WTC11 (cell line): ENCODE measurements at regions of chr2 and their contacts with region 1.

Region 1: GRCh38 chr2:31138037-31138962 is at the start of gene GALNT14:
- DNase-seq: peak; percentile 74
- ATAC-seq: peak; percentile 71
- H3K4me3 Mint-ChIP-seq: peak within 1 kb of the TSS; percentile 74
- H3K27ac Mint-ChIP-seq: no peak within 1 kb of the TSS
- H3K4me1 Mint-ChIP-seq: peaks cover 26% of the 10 kb centered on the region
- H3K27me3 Mint-ChIP-seq: peaks cover 78% of the 10 kb centered on the region
- CTCF ChIP-seq: 0 out of 2 replicates have a peak, but pooled peaks have one; percentile 13
- total RNA-seq, gene GALNT14: 6.0 to 6.8 TPM (median 6.3 TPM) in 3 replicates

Region 2: DNA sequence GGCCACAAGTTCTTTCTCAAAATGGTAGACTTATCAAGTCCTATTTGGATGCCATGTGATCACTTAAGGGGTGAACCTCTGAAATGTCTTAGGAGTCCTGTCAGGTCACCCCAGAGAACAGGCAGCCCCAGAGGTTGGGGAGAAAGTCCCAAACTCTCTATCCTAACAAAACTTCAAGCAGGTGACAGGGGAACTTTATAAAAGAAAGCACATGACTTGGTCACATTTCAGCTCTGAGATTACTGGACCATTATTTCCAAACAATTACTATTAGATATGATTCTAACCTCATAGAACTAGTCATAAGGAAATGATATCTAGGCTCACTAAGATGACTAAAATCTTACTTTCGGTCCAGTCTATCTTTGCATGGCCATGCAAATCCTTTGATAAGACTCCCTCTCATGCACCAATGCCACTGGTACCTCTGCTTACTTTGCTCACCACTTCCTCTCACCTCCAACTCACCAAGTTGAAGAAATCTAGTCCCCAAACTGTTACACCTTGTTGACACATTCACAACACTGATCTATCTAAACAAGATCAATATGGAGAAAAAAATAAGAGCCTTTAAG is 107.1 kb before region 1 on chr2:
- CTCF ChIA-PET with region 1: no interaction called
- POLR2A ChIA-PET with region 1: no interaction called
- DNase-seq: no peak
- ATAC-seq: no peak
- H3K4me3 Mint-ChIP-seq: no peak overlapping the region
- H3K27ac Mint-ChIP-seq: no peak overlapping the region
- H3K4me1 Mint-ChIP-seq: peaks cover 12% of the 10 kb centered on the region
- H3K27me3 Mint-ChIP-seq: no peaks in the 10 kb centered on the region
- CTCF ChIP-seq: no peak

Region 3: GRCh38 chr2:31089645-31090044 is 48.7 kb before region 1 on chr2:
- CTCF ChIA-PET with region 1: interaction called, 14 read pairs
- POLR2A ChIA-PET with region 1: interaction called, 3 read pairs
- DNase-seq: no peak
- ATAC-seq: peak; percentile 51; the same call in 1 of the 2 replicates
- H3K4me3 Mint-ChIP-seq: no peak overlapping the region
- H3K27ac Mint-ChIP-seq: no peak overlapping the region
- H3K4me1 Mint-ChIP-seq: no peaks in the 10 kb centered on the region
- H3K27me3 Mint-ChIP-seq: no peaks in the 10 kb centered on the region; the same call in 1 of the 2 replicates
- CTCF ChIP-seq: no peak

Region 4: DNA sequence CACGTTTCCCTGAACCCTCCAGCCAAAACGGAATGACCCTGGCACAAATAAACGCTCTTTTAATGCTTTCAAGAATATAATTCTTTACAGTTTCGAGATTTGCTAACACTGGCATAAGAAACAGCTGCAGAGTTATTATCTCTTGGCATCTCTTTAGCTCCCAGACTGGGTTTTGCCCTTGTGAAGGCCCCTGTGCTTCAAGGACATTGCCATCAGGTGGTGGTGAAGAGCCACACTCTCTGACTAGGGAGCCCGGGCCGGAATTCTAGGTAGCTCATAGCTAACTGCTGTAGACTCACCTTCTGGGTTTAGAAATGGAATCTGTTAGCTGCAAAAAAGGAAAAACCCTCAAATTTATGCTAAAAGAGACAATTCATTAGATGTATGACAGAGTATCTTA is 13.2 kb after region 1 on chr2:
- CTCF ChIA-PET with region 1: interaction called, 15 read pairs
- POLR2A ChIA-PET with region 1: no interaction called
- DNase-seq: peak; percentile 22
- ATAC-seq: peak; percentile 75
- H3K4me3 Mint-ChIP-seq: no peak overlapping the region
- H3K27ac Mint-ChIP-seq: no peak overlapping the region
- H3K4me1 Mint-ChIP-seq: no peaks in the 10 kb centered on the region
- H3K27me3 Mint-ChIP-seq: no peaks in the 10 kb centered on the region; the same call in 1 of the 2 replicates
- CTCF ChIP-seq: no peak